OCI-LY7 (cell line): ENCODE measurements at regions of chr3 and their contacts with region 1.

Region 1: DNA sequence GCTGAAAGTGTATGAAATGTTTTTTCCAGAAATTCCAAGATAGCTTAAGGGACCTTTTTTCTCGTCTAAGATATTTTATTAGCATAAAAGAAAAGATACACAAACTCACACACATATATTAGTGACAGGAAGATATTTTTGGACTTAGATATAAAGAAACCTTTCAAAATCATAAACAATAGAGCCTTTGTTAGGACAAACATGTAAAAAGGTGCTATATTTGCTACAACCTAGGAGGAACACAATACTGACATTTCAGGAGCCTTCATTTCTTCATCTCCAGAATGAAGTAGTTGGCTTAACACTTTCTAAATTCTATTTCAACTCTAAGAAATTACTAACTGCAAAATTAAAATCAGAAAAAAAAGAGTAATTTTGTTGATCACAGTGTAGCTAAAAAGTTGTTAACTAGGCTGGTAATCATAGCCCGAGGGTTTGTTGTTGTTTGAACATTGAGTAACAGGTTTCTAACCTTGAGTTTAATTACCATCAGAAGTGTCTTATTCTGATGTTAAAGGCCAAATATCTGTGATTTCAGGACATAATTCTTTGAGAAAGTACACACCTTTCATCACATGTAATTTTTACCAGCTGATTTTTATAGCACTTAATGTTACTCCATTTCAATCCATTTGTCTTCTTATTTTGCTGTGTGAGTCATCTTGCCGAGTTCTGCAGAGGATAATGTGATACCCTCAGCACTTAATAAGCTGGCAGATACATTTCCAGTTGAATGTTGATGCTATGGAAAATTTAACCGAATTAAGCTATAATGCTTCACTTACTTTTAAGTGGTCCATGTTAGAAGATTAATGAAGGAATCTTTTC is 97.3 kb downstream of the MBNL1 start:
- DNase-seq: no peak
- H3K4me3 ChIP-seq: no peak overlapping the region
- H3K27ac ChIP-seq: no peak overlapping the region
- H3K4me1 ChIP-seq: peaks cover 10% of the 10 kb centered on the region
- CTCF ChIP-seq: no peak

Region 2: DNA sequence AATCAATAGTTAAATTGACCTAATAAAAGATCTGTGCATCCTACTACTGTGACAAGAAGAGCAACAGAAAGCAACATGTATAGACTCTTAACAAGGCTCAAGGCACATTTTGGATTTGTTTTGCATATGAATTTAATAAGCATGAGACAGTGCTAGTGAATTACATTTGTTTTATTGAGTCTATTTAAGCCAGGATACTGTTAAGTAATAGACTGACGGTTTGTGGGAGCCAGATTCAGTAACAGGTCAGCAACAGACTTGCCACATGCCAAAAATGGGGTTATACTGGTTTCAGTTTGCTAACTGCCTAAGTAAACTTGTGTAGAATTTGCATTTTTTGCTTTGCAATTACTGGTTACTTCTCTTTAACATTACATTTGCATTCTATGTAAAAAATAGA is 43.2 kb before region 1 on chr3:
- CTCF ChIA-PET with region 1: no interaction called
- POLR2A ChIA-PET with region 1: no interaction called
- intact Hi-C with region 1: no loop called
- DNase-seq: peak; percentile 27
- H3K4me3 ChIP-seq: no peak overlapping the region
- H3K27ac ChIP-seq: no peak overlapping the region
- H3K4me1 ChIP-seq: peaks cover 16% of the 10 kb centered on the region
- CTCF ChIP-seq: no peak

Region 3: GRCh38 chr3:152352554-152352953 is 13.4 kb before region 1 on chr3:
- CTCF ChIA-PET with region 1: no interaction called
- POLR2A ChIA-PET with region 1: interaction called, 23 read pairs
- intact Hi-C with region 1: no loop called
- DNase-seq: no peak
- H3K4me3 ChIP-seq: no peak overlapping the region
- H3K27ac ChIP-seq: no peak overlapping the region
- H3K4me1 ChIP-seq: peaks cover 12% of the 10 kb centered on the region
- CTCF ChIP-seq: no peak